ENCODE measurements at regions of chr18 and their contacts with region 1.

Region 1: DNA sequence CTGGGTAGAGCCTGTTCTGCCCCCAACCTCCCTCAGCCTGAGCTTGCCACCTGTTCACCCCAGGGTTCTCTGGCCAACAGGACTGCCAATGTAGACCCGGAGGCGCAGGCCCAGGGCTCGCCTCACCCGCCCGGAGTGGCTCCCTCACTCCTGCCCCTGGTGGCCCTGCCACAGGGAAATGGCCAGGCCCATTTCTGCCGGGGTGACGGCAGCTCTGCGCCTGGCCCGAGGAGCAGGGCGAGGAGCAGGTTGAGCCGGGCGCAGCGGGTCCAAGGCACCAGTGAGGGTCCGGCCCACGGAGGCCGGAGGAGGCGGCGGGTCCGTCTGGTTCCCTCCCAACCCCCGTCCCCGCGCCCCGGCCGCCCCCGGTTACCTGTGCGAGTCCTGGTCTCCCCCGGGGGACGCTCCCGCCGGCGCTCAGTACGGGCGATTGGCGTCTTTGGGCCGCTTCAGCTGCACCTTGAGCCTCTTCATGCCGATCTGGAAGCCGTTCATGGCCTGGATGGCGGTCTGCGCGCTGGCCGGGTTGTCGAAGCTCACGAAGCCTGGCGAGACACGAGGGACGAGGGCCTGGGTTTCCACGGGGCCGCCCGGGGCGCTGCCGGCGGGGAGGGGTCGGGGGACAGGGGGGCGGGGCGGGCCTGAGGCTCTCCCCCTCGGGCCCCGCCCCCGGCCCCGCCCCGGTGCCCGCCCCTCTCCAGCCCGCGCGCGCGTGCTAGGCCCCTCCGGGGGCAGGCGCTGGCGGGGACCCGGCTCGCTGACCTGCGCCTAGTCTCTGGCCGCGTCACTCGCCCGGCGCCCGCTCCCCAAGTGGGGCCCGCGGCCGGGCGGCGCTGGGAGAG is 312.0 kb downstream of the CELF4 start:
- DNase-seq: peak; percentile 69
- H3K4me3 Mint-ChIP-seq: peak overlapping the region; percentile 74
- H3K27ac Mint-ChIP-seq: no peak overlapping the region
- H3K4me1 Mint-ChIP-seq: peaks cover 42% of the 10 kb centered on the region
- H3K27me3 Mint-ChIP-seq: peaks cover 24% of the 10 kb centered on the region
- CTCF ChIP-seq: no peak

Region 2: GRCh38 chr18:36680042-36680441 is 573.6 kb before region 1 on chr18:
- CTCF ChIA-PET with region 1: no interaction called
- intact Hi-C with region 1: no loop called
- DNase-seq: no peak
- H3K4me3 Mint-ChIP-seq: no peak overlapping the region
- H3K27ac Mint-ChIP-seq: no peak overlapping the region
- H3K4me1 Mint-ChIP-seq: no peaks in the 10 kb centered on the region
- H3K27me3 Mint-ChIP-seq: no peaks in the 10 kb centered on the region
- CTCF ChIP-seq: no peak

Region 3: DNA sequence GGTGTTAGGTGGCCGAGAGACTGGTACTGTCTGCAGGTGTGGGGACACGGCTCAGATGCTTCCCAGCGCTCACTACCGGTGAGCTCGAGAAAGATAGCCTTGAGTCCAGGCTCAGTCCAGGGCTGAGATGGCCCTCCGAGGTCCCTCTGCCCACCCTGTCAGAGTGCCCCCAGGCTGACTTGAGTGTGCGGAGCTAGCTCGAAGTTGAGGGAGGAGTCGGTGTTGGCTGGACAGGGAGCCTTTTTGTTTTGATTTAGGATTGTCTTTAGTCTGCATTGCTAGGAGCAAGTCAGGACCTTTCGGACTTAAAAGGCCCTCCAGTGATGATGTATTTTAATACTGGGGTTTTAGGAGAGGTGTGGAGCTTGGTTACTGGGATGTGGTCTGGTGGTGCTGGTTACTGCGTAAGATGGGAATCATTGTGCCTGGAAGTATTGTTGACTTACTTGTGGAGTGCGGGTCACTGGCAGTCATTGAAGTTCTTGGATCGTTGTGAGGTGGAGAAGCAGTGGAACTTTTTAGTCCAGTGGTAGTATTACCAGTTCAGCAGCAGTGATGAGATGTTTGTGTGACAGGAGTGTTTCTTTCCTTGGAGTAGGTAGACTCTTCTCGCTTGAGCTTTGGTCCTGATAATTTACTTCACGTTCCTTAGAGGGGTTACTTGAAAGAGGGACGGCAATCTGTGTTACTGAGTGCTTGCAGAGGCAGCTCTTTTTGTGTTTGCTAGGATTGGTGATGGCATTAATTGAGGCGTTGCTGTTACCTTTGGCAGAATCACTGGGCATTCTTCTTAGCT is 424.1 kb before region 1 on chr18:
- CTCF ChIA-PET with region 1: no interaction called
- intact Hi-C with region 1: loop called (anchors 10 kb)
- DNase-seq: no peak
- H3K4me3 Mint-ChIP-seq: peak overlapping the region; percentile 95
- H3K27ac Mint-ChIP-seq: peak overlapping the region; percentile 91
- H3K4me1 Mint-ChIP-seq: peaks cover 32% of the 10 kb centered on the region
- H3K27me3 Mint-ChIP-seq: no peaks in the 10 kb centered on the region
- CTCF ChIP-seq: no peak

Region 4: GRCh38 chr18:37019157-37019827 is 234.3 kb before region 1 on chr18:
- CTCF ChIA-PET with region 1: interaction called, 4 read pairs
- intact Hi-C with region 1: loop called (anchors 5 kb)
- DNase-seq: peak; percentile 44
- H3K4me3 Mint-ChIP-seq: no peak overlapping the region
- H3K27ac Mint-ChIP-seq: no peak overlapping the region
- H3K4me1 Mint-ChIP-seq: no peaks in the 10 kb centered on the region
- H3K27me3 Mint-ChIP-seq: no peaks in the 10 kb centered on the region
- CTCF ChIP-seq: peak; percentile 67

Region 5: DNA sequence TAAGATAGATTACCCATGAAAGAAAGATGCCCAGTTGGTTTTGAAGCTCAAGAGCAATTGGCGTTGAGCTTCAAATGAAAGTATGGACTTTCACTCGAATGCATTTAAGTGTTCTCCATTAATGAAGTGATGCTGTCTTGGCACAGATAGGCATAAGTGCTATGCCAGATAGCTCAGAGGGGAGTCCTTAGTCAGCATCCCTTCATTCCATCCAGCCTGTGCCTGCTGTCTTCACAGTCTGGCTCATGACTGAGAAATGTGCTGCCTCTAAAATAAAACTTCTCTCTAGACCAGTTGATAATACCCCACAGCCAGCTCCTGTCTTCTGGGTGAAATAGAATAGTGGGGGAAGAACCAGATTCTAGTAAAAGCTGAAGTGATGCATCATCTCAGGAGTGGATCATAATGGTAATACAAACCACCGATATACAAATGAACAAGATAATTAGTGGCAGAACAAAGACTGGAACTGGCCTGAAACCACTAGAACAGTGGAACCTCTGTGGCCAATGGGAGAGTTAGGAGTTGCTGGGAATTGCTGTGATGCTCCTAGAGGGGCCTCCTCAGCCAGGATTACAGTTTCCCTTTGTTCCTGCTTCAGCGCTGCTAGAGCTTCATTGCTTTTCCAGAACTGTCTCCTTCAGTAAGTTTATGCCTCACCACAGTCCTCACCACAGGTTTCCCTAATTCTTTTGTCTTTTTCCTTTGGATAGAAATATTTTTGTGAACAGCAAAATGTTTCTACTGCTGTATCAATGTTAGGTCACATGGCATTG is 65.4 kb before region 1 on chr18:
- CTCF ChIA-PET with region 1: no interaction called
- intact Hi-C with region 1: no loop called
- DNase-seq: no peak
- H3K4me3 Mint-ChIP-seq: no peak overlapping the region
- H3K27ac Mint-ChIP-seq: no peak overlapping the region
- H3K4me1 Mint-ChIP-seq: no peaks in the 10 kb centered on the region
- H3K27me3 Mint-ChIP-seq: no peaks in the 10 kb centered on the region
- CTCF ChIP-seq: no peak

Region 6: GRCh38 chr18:37346048-37346447 is 92.4 kb after region 1 on chr18:
- CTCF ChIA-PET with region 1: no interaction called
- intact Hi-C with region 1: no loop called
- DNase-seq: no peak
- H3K4me3 Mint-ChIP-seq: no peak overlapping the region
- H3K27ac Mint-ChIP-seq: no peak overlapping the region
- H3K4me1 Mint-ChIP-seq: peaks cover 7% of the 10 kb centered on the region
- H3K27me3 Mint-ChIP-seq: peaks cover 100% of the 10 kb centered on the region
- CTCF ChIP-seq: no peak

Measured in Calu3 (cell line).